ENCODE measurements at regions of chr9 and their contacts with region 1.

Region 1: GRCh38 chr9:34603610-34604231 is 8.2 kb downstream of the RPP25L start:
- DNase-seq: peak; percentile 88
- H3K4me3 ChIP-seq: no peak overlapping the region; a peak in 1 of 4 replicates
- H3K27ac ChIP-seq: no peak overlapping the region
- H3K4me1 ChIP-seq: peaks cover 0 to 7% of the 10 kb centered on the region in 2 experiments; a peak in 1 of 4 replicates
- H3K27me3 ChIP-seq: no peaks in the 10 kb centered on the region
- CTCF ChIP-seq: peak; percentile 94
- EP300 ChIP-seq: no peak
- RAD21 ChIP-seq: peak; percentile 97

Region 2: GRCh38 chr9:33721674-33722358 is 881.9 kb before region 1 on chr9:
- CTCF ChIA-PET with region 1: no interaction called
- POLR2A ChIA-PET with region 1: no interaction called
- DNase-seq: peak; percentile 82
- H3K4me3 ChIP-seq: peak overlapping the region in 1 of 2 experiments; percentile 51; a peak in 1 of 4 replicates
- H3K27ac ChIP-seq: no peak overlapping the region
- H3K4me1 ChIP-seq: peaks cover 0 to 3% of the 10 kb centered on the region in 2 experiments; a peak in 1 of 4 replicates
- H3K27me3 ChIP-seq: no peaks in the 10 kb centered on the region
- CTCF ChIP-seq: peak; percentile 98
- EP300 ChIP-seq: no peak
- RAD21 ChIP-seq: peak; percentile 99

Region 3: DNA sequence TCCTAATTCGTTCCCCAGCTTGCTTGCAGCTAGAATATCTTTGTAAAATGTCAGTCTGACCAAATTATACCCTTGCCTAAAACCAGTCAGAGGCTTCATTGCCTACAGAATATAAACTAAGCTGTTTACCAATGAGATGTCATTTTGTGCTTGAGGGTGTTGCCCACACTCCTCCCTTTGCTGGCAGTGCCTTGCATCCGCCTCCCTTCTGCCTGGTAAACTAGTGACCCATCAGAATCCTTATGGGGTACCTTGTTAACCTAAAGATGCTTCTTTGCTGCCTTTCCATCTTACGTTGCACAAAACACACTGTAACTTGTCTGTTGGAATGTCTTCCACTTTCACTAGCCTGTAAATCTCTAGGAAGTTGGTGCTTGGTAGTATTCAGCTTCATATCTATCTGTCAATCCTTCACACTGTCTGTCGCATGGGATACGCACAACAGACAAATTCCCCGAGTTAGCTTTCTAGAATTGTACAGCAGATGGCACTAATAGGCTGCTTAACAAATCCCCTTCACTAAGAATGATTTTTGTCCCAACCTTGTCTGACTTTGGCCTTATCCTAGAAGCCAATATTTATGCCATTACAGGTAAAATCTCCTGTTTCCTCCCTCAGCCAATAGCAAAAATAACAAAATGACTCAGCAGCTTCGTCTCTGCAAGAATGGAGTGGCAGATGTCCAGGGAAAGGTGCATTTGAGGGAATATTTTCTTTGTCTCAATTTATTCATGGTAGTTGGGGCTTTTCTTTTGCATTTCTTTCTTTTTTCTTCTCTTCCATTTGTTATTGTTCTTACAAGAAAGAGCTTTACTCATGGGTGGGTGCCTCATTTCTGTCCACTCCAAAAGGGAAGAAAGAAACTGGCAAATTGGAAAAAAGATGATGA is 271.4 kb before region 1 on chr9:
- CTCF ChIA-PET with region 1: interaction called, 38 read pairs
- POLR2A ChIA-PET with region 1: interaction called, 3 read pairs
- DNase-seq: peak; percentile 46
- H3K4me3 ChIP-seq: no peak overlapping the region; a peak in 1 of 4 replicates
- H3K27ac ChIP-seq: no peak overlapping the region
- H3K4me1 ChIP-seq: peaks cover 0 to 6% of the 10 kb centered on the region in 2 experiments; a peak in 2 of 4 replicates
- H3K27me3 ChIP-seq: no peaks in the 10 kb centered on the region
- CTCF ChIP-seq: peak; percentile 62
- EP300 ChIP-seq: no peak
- RAD21 ChIP-seq: peak; percentile 88

Region 4: GRCh38 chr9:34446468-34446891 is 157.2 kb before region 1 on chr9:
- CTCF ChIA-PET with region 1: interaction called, 10 read pairs
- POLR2A ChIA-PET with region 1: no interaction called
- DNase-seq: no peak
- H3K4me3 ChIP-seq: no peak overlapping the region
- H3K27ac ChIP-seq: no peak overlapping the region
- H3K4me1 ChIP-seq: peaks cover 9 to 15% of the 10 kb centered on the region in 2 experiments; a peak in 2 of 4 replicates
- H3K27me3 ChIP-seq: no peaks in the 10 kb centered on the region
- CTCF ChIP-seq: no peak
- EP300 ChIP-seq: no peak
- RAD21 ChIP-seq: no peak

Region 5: GRCh38 chr9:34522971-34523797 is 80.5 kb before region 1 on chr9 and contains the start of gene ENHO:
- CTCF ChIA-PET with region 1: interaction called, 13 read pairs
- POLR2A ChIA-PET with region 1: no interaction called
- DNase-seq: peak; percentile 99
- H3K4me3 ChIP-seq: peak within 1 kb of the TSS; percentile 50 to 53
- H3K27ac ChIP-seq: peak within 1 kb of the TSS in 1 of 2 experiments; percentile 36; a peak in 1 of 4 replicates
- H3K4me1 ChIP-seq: peaks cover 0 to 15% of the 10 kb centered on the region in 2 experiments; a peak in 1 of 4 replicates
- H3K27me3 ChIP-seq: no peaks in the 10 kb centered on the region
- CTCF ChIP-seq: no peak
- EP300 ChIP-seq: no peak
- RAD21 ChIP-seq: no peak
- polyA plus RNA-seq, gene ENHO: 1.2 and 1.5 TPM in 2 replicates

Region 6: DNA sequence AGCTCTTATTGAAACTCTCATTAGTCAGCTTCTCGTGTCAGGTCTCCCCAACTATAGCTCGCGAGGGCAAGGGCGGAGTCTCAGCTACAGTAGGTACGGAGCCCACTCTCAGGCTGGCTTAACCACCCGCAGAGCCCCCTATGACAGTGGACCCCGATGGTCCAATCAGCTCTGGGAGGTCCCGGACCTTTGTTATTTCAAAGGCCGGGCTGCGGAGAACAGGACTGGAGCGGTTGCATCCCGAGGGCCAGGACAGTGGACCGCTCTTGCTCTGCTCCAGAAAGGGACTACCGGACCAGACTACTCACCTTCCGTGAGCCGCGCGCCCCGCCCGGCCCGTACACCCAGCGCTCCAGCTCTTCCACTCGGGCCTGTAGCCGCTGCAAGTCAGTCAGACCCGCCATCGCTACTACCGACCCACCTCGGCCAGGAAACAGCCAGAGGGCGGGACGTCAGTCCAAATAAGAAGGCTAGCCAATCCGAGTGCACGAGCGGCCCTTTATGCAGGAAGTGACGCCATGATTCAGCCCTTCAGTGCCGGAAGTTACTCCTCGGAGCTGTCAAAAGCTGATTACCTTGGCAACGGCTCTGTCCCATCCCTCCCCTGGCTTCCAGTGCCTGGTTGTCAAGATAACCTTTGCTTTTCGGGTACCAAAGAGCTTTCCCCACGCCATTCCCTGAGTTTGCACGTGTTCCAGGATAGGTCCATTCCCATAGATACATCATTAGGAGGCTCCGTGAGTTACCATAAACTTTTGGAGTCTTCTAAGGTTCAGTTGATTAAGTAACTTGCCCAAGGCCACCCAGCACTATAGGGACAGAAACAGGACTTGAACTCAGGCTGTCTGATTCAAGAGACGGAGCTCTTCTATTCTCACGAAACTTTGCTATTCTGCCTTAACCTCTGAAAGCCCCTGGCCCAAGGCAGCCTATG is 16.6 kb after region 1 on chr9 and contains the start of gene DCTN3:
- CTCF ChIA-PET with region 1: interaction called, 36 read pairs
- POLR2A ChIA-PET with region 1: no interaction called
- DNase-seq: peak; percentile 97
- H3K4me3 ChIP-seq: peak within 1 kb of the TSS; percentile 94 to 96
- H3K27ac ChIP-seq: peak within 1 kb of the TSS in 1 of 2 experiments; percentile 13; a peak in 2 of 4 replicates
- H3K4me1 ChIP-seq: peaks cover 5 to 22% of the 10 kb centered on the region in 2 experiments; a peak in 2 of 4 replicates
- H3K27me3 ChIP-seq: no peaks in the 10 kb centered on the region
- CTCF ChIP-seq: no peak
- EP300 ChIP-seq: no peak
- RAD21 ChIP-seq: no peak
- polyA plus RNA-seq, gene DCTN3: 210 and 300 TPM in 2 replicates

Region 7: GRCh38 chr9:34637356-34638137 is 33.8 kb after region 1 on chr9 and contains the start of gene SIGMAR1:
- CTCF ChIA-PET with region 1: interaction called, 71 read pairs
- POLR2A ChIA-PET with region 1: no interaction called
- DNase-seq: peak; percentile 98
- H3K4me3 ChIP-seq: peak within 1 kb of the TSS; percentile 66 to 69
- H3K27ac ChIP-seq: peak within 1 kb of the TSS; percentile 32 to 72; a peak in 3 of 4 replicates
- H3K4me1 ChIP-seq: peaks cover 4 to 20% of the 10 kb centered on the region in 2 experiments; a peak in 1 of 4 replicates
- H3K27me3 ChIP-seq: no peaks in the 10 kb centered on the region
- CTCF ChIP-seq: no peak
- EP300 ChIP-seq: no peak; a peak in 1 of 4 replicates
- RAD21 ChIP-seq: no peak
- polyA plus RNA-seq, gene SIGMAR1: 73.7 and 79.0 TPM in 2 replicates